ENCODE measurements at regions of chr9 and their contacts with region 1.

Region 1: GRCh38 chr9:34376596-34377403 is at the start of gene MYORG:
- DNase-seq: peak; percentile 98
- H3K4me3 ChIP-seq: peak within 1 kb of the TSS; percentile 73 to 85 (median 84)
- H3K27ac ChIP-seq: peak within 1 kb of the TSS; percentile 42
- H3K4me1 ChIP-seq: peaks cover 39% of the 10 kb centered on the region
- H3K27me3 ChIP-seq: no peaks in the 10 kb centered on the region
- CTCF ChIP-seq: no peak
- total RNA-seq, gene MYORG: 23.8 to 35.0 TPM

Region 2: GRCh38 chr9:34328987-34329832 is 47.6 kb before region 1 on chr9 and contains the starts of genes KIF24 and NUDT2:
- CTCF ChIA-PET with region 1: no interaction called
- dilution Hi-C with region 1: no loop called
- in situ Hi-C with region 1: no loop called
- intact Hi-C with region 1: loop called (anchors 1 kb)
- DNase-seq: peak; percentile 100
- H3K4me3 ChIP-seq: peak within 1 kb of the TSS; percentile 85 to 89 (median 86)
- H3K27ac ChIP-seq: peak within 1 kb of the TSS; percentile 96
- H3K4me1 ChIP-seq: peaks cover 45% of the 10 kb centered on the region
- H3K27me3 ChIP-seq: no peaks in the 10 kb centered on the region
- CTCF ChIP-seq: no peak
- total RNA-seq, gene KIF24: 1.3 to 3.9 TPM
- total RNA-seq, gene NUDT2: 17.8 to 22.9 TPM

Region 3: GRCh38 chr9:34337404-34337803 is 39.4 kb before region 1 on chr9:
- CTCF ChIA-PET with region 1: no interaction called
- dilution Hi-C with region 1: loop called (anchors 5 kb)
- in situ Hi-C with region 1: no loop called
- intact Hi-C with region 1: loop called (anchors 1 kb)
- DNase-seq: no peak
- H3K4me3 ChIP-seq: no peak overlapping the region
- H3K27ac ChIP-seq: no peak overlapping the region
- H3K4me1 ChIP-seq: peaks cover 18% of the 10 kb centered on the region
- H3K27me3 ChIP-seq: no peaks in the 10 kb centered on the region
- CTCF ChIP-seq: peak; percentile 11 to 20

Measured in mammary epithelial cell (primary cell).